ENCODE measurements at regions of chr11 and their contacts with region 1.

Region 1: DNA sequence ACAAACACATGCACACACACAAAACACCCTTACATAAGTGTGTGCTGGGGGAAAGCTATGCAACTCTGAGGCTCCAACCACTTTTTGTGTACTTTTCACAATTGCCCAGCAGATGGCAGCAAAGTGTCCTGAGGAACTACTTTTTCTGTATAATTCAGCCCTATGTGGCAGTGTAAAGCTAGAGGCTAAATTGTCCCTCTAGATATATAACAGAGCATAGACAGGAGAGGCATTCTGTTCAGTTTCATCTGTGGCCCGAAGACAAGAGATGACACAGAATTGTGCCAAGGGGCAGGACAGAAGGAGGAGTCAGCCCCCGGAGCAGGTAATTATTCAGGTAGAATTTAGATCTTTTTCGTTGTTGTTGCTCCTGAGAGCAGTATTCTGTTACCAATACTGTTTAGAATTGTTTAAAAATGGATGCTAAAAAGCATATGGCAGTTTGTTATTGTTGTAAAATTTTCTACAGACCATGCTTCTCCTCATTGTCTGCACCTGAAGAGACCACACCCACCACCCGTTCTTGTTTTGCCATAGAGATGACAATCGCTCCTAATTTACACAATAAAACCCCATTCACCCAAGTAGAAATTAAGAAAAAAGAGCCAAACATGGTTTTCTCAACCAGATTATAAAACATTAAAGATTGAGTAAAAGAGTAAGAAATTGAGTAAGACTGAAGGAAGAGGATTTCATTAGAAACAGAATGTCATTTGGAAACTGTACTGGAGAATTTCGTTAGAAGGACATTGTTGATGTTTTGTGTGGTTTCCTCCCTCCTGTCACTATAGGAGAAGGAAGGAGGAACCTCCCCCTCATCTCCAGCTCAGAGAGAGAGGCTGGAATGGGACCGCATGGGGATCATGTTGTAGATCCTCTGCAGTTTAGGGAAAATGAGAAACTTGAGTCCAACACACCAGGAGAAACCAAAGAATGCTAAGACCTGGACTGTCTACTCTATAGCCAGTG is 14.5 kb upstream of the MS4A7 start:
- DNase-seq: peak; percentile 72 to 89 (median 83)
- H3K4me3 ChIP-seq: peak overlapping the region in 4 of 7 experiments; percentile 9 to 40 (median 32)
- H3K27ac ChIP-seq: no peak overlapping the region
- H3K4me1 ChIP-seq: peaks cover 7 to 20% (median 17%) of the 10 kb centered on the region in 4 experiments
- H3K27me3 ChIP-seq: no peaks in the 10 kb centered on the region

Region 2: GRCh38 chr11:60230681-60231080 is 133.1 kb before region 1 on chr11:
- CTCF ChIA-PET with region 1: no interaction called
- POLR2A ChIA-PET with region 1: no interaction called
- DNase-seq: no peak
- H3K4me3 ChIP-seq: no peak overlapping the region
- H3K27ac ChIP-seq: no peak overlapping the region
- H3K4me1 ChIP-seq: no peaks in the 10 kb centered on the region
- H3K27me3 ChIP-seq: no peaks in the 10 kb centered on the region

Region 3: GRCh38 chr11:60265373-60266214 is 98.2 kb before region 1 on chr11:
- CTCF ChIA-PET with region 1: interaction called, 14 read pairs
- POLR2A ChIA-PET with region 1: no interaction called
- DNase-seq: peak; percentile 44 to 64 (median 58)
- H3K4me3 ChIP-seq: no peak overlapping the region
- H3K27ac ChIP-seq: no peak overlapping the region
- H3K4me1 ChIP-seq: no peaks in the 10 kb centered on the region
- H3K27me3 ChIP-seq: no peaks in the 10 kb centered on the region

Region 4: DNA sequence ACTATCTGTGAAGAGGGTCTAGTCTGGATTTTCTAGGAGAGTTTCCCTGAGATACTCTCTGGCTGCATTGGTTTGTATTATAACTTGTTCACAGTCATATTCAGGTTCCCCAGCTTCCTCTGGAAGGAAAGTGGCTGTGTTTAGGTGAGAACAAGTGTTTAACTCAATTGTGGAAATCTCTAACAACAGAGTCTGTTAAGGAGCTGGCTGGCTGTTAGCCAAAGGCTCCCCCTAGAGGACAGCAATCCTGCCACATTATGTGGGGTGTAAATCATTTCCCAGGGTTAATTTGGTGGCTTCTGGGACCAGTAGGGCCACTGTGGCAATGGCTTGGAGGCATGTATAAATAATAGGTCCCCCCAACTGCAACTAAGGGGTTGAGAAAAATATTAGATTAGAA is 18.3 kb before region 1 on chr11:
- CTCF ChIA-PET with region 1: interaction called, 14 read pairs
- POLR2A ChIA-PET with region 1: no interaction called
- DNase-seq: peak; percentile 54 to 77 (median 66)
- H3K4me3 ChIP-seq: no peak overlapping the region
- H3K27ac ChIP-seq: no peak overlapping the region
- H3K4me1 ChIP-seq: peaks cover 0 to 4% (median 0%) of the 10 kb centered on the region in 4 experiments
- H3K27me3 ChIP-seq: no peaks in the 10 kb centered on the region

Region 5: DNA sequence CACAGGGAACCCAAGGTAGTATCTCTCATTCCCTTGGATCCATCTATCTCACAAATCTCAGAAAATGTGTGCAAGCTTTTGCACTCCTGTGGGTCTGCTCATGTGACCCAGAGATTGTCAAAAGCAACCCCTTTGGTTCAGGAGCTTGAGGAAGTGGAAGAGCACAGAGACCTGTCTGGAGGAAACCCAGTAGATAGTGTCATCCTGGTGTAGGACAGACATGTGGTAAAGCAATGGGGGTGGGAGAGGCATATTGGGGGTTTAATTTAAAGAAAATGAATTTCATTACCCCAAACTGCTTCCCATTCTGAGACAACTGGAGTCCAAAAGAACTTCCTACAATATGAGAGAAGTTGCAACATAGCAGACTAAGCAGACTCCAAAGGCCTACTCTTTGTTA is 26.6 kb after region 1 on chr11:
- CTCF ChIA-PET with region 1: interaction called, 14 read pairs
- POLR2A ChIA-PET with region 1: no interaction called
- DNase-seq: no peak
- H3K4me3 ChIP-seq: no peak overlapping the region
- H3K27ac ChIP-seq: no peak overlapping the region
- H3K4me1 ChIP-seq: peaks cover 0 to 24% (median 5%) of the 10 kb centered on the region in 4 experiments
- H3K27me3 ChIP-seq: no peaks in the 10 kb centered on the region

Region 6: GRCh38 chr11:60485986-60486385 is 122.2 kb after region 1 on chr11:
- CTCF ChIA-PET with region 1: interaction called, 16 read pairs
- POLR2A ChIA-PET with region 1: no interaction called
- DNase-seq: peak; percentile 42 to 63 (median 60)
- H3K4me3 ChIP-seq: no peak overlapping the region
- H3K27ac ChIP-seq: no peak overlapping the region
- H3K4me1 ChIP-seq: peaks cover 0 to 13% (median 6%) of the 10 kb centered on the region in 4 experiments
- H3K27me3 ChIP-seq: no peaks in the 10 kb centered on the region

Region 7: DNA sequence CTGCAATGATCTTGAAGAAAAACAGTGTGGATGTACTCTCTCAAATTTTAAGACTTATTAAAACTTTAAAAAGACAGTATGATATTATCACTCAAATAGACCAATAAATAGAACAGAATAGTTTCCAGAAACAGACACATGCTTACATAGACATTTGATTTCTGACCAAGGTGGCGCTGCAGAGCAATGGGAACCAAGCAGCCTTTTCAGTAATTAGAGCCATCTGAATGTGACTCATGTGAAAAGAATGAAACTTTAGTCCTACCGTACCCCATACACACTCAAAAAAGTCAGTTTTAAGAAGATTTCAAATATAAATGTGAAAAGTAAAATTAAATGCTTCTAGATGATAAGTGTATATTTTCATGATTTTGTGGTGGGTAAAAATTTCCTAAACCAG is 261.4 kb after region 1 on chr11:
- CTCF ChIA-PET with region 1: interaction called, 30 read pairs
- POLR2A ChIA-PET with region 1: no interaction called
- DNase-seq: peak in 1 of 3 donors; percentile 15
- H3K4me3 ChIP-seq: no peak overlapping the region
- H3K27ac ChIP-seq: no peak overlapping the region
- H3K4me1 ChIP-seq: no peaks in the 10 kb centered on the region
- H3K27me3 ChIP-seq: no peaks in the 10 kb centered on the region

Measured in common myeloid progenitor, CD34-positive (primary cell).